ENCODE measurements at regions of chr5 and their contacts with region 1.

Region 1: DNA sequence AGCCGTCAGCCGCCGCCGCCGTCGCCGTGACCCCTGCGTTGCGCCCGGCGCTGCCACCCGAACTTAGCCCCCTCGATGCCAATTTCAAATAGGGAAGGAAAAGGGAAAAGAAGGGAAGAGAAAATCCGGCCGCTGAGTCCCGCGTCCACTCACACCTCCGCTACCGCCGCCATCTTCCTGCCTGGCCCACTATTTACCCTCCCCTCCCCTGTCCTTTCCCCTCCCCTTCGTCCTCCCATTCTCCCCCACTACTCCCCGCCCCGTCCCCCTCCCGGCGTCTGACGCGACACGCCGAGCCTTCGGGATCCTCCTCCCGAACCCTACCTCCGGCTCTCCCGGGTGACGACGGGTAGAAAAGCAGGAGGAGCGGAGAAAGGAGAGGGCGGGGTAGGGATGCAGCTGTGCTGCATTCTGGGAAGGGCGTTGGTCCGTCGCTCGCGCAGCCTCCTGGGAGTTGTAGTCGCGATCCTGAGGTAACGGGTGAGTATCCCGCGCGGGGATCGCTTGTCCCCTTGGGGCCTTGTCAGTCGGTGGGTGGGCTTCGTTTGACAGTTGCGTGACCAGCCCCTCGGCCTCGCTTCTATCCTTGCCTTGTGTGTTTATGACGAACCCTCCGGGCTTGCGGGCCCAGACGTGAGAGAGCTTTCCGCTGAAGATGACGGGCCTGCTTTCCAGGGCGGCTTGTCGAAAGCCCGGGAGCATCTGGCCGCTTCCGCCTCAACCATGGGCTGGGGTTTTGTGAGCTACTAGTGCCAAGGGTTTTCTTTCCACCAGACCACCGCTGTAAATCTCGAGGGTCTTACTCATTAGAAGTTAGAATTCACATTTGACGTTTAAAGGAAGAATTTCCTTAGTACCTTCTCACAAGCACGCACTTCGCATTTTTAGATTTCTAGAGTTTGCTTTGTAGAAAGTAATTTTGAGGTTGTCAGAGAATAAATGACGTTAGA is at the starts of genes CERT1 and POLK:
- DNase-seq: peak; percentile 99
- H3K4me3 ChIP-seq: peak within 1 kb of the TSS; percentile 82 to 91 (median 90)
- H3K27ac ChIP-seq: peak within 1 kb of the TSS; percentile 89 to 95 (median 92)
- H3K4me1 ChIP-seq: peaks cover 0 to 50% (median 36%) of the 10 kb centered on the region in 4 donors
- H3K27me3 ChIP-seq: no peaks in the 10 kb centered on the region
- CTCF ChIP-seq: no peak
- EP300 ChIP-seq: peak in 1 of 4 donors; percentile 34
- POLR2A ChIP-seq: peak; percentile 56 to 58
- total RNA-seq, gene CERT1: 18.6 to 40.2 (median 37.9) TPM
- total RNA-seq, gene POLK: 35.2 to 48.5 (median 40.5) TPM

Region 2: GRCh38 chr5:75142566-75143136 is 369.1 kb before region 1 on chr5:
- intact Hi-C with region 1: no loop called
- DNase-seq: no peak
- H3K4me3 ChIP-seq: no peak overlapping the region
- H3K27ac ChIP-seq: no peak overlapping the region
- H3K4me1 ChIP-seq: no peaks in the 10 kb centered on the region
- H3K27me3 ChIP-seq: no peaks in the 10 kb centered on the region
- CTCF ChIP-seq: no peak
- EP300 ChIP-seq: no peak
- POLR2A ChIP-seq: no peak

Region 3: DNA sequence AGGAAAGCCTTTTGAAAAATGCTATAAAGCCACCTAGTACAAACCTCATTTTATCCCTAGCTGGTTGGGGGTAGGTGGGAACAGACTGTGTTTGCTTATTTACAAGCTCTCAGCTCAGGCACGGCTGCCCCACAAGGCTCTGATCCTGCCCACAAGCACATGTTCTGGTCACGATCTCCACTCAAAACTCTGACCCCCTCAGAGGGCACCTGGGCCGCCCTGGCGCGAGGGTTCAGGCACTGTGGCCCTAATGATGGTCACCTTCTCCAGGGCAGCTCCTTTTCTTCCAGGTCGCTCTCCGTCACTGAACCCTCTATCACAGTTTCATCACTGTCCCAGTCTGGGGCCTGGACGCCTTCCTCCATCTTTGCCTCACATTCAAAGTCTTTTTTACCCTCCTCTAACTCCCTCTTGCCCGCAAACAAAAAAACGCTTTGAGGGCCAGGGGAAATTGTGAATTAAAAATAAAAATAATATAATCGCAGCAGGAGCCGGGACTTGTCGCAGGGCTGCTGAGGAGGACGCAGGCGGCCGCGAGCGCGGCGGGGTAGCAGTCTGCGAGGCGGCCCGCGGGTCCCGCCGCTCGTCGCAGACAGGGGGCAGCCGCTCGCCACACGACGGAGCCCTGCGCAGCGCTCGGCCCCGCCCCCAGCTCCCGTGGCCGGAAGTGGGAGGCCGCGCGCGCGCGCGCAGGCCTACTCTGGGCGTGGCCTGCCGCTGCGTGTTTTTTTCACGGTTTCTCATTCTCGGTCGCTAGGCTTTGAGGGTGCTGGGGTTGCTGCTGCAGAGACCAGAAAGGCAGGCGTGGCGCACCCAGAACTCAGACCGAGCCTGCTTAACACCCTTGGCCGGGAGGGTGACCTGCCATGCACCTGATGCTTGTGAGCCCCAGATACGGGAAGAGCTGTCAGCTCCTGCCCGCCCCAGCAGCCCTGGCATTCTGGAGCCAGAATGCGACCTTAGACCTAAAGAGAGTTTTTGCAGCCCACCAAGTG is 275.1 kb before region 1 on chr5 and contains the start of gene ANKRD31:
- intact Hi-C with region 1: loop called (anchors 5 kb)
- DNase-seq: peak; percentile 90
- H3K4me3 ChIP-seq: peak within 1 kb of the TSS; percentile 53 to 71 (median 60)
- H3K27ac ChIP-seq: peak within 1 kb of the TSS; percentile 71 to 79 (median 78)
- H3K4me1 ChIP-seq: peaks cover 0 to 9% (median 3%) of the 10 kb centered on the region in 4 donors
- H3K27me3 ChIP-seq: no peaks in the 10 kb centered on the region
- CTCF ChIP-seq: peak in 3 of 4 experiments; percentile 41 to 92 (median 50)
- EP300 ChIP-seq: no peak
- POLR2A ChIP-seq: peak in 1 of 2 donors; percentile 12
- total RNA-seq, gene ANKRD31: under 0.01 to 0.33 (median 0.28) TPM in 3 of 4 donors, not detected in the other

Region 4: GRCh38 chr5:75336625-75337339 is 174.9 kb before region 1 on chr5 and contains the start of gene HMGCR:
- intact Hi-C with region 1: loop called (anchors 2 kb)
- DNase-seq: peak; percentile 99
- H3K4me3 ChIP-seq: peak within 1 kb of the TSS; percentile 80 to 95 (median 88)
- H3K27ac ChIP-seq: peak within 1 kb of the TSS; percentile 90 to 98 (median 96)
- H3K4me1 ChIP-seq: peaks cover 0 to 19% (median 14%) of the 10 kb centered on the region in 4 donors
- H3K27me3 ChIP-seq: no peaks in the 10 kb centered on the region
- CTCF ChIP-seq: peak in 1 of 4 experiments; percentile 6
- EP300 ChIP-seq: no peak
- POLR2A ChIP-seq: peak; percentile 73 to 78
- total RNA-seq, gene HMGCR: 9.7 to 16.1 (median 12.2) TPM

Region 5: GRCh38 chr5:75433814-75434506 is 77.8 kb before region 1 on chr5:
- intact Hi-C with region 1: no loop called
- DNase-seq: no peak
- H3K4me3 ChIP-seq: no peak overlapping the region
- H3K27ac ChIP-seq: no peak overlapping the region
- H3K4me1 ChIP-seq: peaks cover 0 to 5% (median 0%) of the 10 kb centered on the region in 4 donors
- H3K27me3 ChIP-seq: no peaks in the 10 kb centered on the region
- CTCF ChIP-seq: no peak
- EP300 ChIP-seq: no peak
- POLR2A ChIP-seq: no peak

Region 6: GRCh38 chr5:75566710-75567309 is 55.1 kb after region 1 on chr5:
- intact Hi-C with region 1: loop called (anchors 5 kb)
- DNase-seq: no peak
- H3K4me3 ChIP-seq: no peak overlapping the region
- H3K27ac ChIP-seq: peak overlapping the region; percentile 57 to 75 (median 68)
- H3K4me1 ChIP-seq: peaks cover 0 to 30% (median 25%) of the 10 kb centered on the region in 4 donors
- H3K27me3 ChIP-seq: no peaks in the 10 kb centered on the region
- CTCF ChIP-seq: no peak
- EP300 ChIP-seq: no peak
- POLR2A ChIP-seq: no peak

Region 7: DNA sequence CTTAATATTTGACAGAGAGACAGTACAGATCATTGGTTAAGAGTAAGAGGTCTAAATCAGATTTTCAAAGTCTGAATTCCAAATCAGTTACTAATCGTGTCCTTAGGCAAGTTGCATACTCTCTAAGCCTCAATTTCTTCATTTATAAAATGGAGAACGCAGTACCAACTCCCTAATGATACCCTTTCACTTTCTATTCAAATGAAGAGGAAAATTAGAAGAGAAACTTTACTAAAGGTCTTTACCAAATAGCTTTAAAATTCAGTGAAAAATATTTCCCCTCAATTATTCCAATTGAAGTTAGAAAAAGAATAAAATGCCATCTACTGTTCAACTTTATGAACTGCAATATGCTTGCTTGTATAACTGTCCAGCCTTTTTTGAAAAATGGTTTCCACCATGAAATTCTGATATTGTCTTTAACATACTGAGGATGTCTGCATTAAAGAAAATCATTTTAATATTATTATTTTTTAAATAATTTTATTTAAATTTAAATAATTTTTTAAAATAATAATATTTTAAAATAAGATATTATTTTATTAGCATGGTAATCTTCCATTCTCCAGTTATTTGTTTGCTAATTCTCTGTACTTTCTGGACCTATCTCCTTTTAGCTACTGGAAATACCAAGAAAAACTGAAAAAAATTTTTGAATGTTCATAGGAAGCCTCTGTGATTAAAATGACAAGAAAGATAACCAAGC is 169.6 kb after region 1 on chr5:
- intact Hi-C with region 1: loop called (anchors 5 kb)
- DNase-seq: no peak
- H3K4me3 ChIP-seq: no peak overlapping the region
- H3K27ac ChIP-seq: peak overlapping the region in 3 of 4 donors; percentile 20 to 45 (median 23)
- H3K4me1 ChIP-seq: peaks cover 0 to 19% (median 6%) of the 10 kb centered on the region in 4 donors
- H3K27me3 ChIP-seq: no peaks in the 10 kb centered on the region
- CTCF ChIP-seq: peak; percentile 13 to 75 (median 59)
- EP300 ChIP-seq: no peak
- POLR2A ChIP-seq: no peak

Region 8: DNA sequence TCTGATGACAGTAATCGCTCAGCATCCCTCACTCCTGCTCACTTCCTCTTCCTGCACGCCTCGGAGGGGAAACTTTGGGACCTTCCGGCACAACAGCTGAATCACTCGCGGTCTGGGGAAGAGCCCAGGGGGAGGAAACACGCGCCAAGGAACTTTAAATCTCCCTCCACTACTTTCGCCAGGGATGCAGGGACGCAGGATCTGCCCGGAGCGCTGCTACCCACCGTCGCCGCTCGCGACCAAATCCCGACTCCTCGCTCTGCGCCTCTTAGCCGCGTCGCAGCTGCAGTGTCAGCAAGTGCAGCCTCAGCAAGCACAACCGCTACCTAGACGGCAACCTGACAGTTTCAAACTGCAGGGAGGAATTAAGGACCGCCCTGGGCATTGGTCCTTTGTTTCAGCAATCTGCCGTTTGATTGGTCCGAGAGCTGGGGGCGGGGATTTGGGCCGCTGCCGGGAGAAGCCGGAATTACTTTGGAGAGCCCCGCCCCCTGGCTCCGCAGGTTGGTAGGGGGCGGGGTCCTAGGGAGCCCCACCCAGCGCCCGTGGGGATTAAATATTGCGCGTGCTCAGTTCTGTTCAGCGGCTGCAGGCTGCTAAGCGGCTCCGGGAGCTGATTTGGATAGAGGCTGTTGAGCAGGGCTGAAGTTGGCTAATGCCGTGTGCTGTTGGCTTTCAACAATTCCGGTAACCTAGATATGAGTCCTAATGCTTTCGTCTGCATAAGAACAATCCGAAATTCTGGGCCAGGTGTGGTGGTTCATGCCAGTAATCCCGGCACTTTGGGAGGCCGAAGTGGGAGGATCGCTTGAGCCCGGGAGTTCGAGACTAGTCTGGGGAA is 205.6 kb after region 1 on chr5 and contains the start of gene POC5:
- intact Hi-C with region 1: loop called (anchors 2 kb)
- DNase-seq: peak; percentile 98
- H3K4me3 ChIP-seq: peak within 1 kb of the TSS; percentile 55 to 91 (median 75)
- H3K27ac ChIP-seq: peak within 1 kb of the TSS; percentile 79 to 90 (median 88)
- H3K4me1 ChIP-seq: peaks cover 0 to 14% (median 11%) of the 10 kb centered on the region in 4 donors
- H3K27me3 ChIP-seq: no peaks in the 10 kb centered on the region
- CTCF ChIP-seq: no peak
- EP300 ChIP-seq: no peak
- POLR2A ChIP-seq: peak; percentile 23 to 28
- total RNA-seq, gene POC5: 7.1 to 16.6 (median 9.7) TPM